Esophagus muscularis mucosa (tissue), 4 donors: ENCODE measurements at regions of chr4 and their contacts with region 1.

Region 1: DNA sequence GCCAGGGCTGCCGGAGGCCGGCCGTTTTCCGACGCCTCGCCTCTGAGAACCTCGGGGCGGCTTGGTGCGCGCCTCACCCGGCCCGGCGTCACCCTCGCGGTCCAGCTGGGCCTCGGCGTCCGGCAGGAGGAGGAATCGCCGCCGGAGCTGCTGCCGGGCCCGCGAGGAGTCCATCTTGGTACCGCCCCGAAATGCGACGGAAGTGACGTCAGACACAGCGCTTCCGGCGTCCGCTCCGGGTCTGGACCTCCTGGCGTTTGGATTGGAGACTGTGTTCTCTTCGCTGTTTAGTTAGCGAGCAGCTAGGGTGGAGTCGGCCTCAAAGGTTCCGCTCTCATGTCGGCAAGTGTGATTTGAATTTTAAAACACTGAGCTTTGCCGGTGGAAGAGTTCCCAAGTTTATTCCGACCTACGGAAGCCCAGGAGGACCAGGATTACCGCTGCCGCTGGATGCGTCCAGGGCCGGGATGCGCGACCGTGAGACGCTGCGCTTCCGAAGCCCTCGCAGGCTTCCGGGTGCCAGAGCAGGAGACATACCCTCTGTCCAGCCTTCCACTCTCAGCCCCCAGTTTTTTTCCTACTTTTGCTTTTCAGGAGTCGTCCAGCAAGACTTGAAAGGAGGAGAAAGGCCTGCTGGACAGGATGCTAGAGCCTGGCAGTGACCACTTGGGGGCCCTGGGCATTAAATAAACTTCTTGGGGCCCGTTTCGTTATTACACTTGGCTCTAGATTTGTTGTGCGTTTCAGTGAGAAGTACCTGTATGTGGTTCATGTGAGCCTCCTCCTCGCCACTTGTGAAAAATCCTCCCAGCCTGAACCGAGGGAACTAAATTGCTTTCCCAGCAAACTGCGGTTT is at the start of gene TMEM128:
- DNase-seq: peak; percentile 97
- H3K4me3 ChIP-seq: peak within 1 kb of the TSS; percentile 77 to 93 (median 88)
- H3K27ac ChIP-seq: peak within 1 kb of the TSS; percentile 89 to 96 (median 92)
- H3K4me1 ChIP-seq: peaks cover 19 to 38% (median 23%) of the 10 kb centered on the region in 4 donors
- H3K27me3 ChIP-seq: no peaks in the 10 kb centered on the region
- CTCF ChIP-seq: peak in 1 of 3 experiments; percentile 27
- EP300 ChIP-seq: no peak
- POLR2A ChIP-seq: peak; percentile 47
- total RNA-seq, gene TMEM128: 10.7 to 15.4 (median 14.4) TPM

Region 2: GRCh38 chr4:4334798-4335520 is 86.7 kb after region 1 on chr4:
- intact Hi-C with region 1: loop called (anchors 2 kb)
- DNase-seq: no peak
- H3K4me3 ChIP-seq: no peak overlapping the region
- H3K27ac ChIP-seq: no peak overlapping the region
- H3K4me1 ChIP-seq: peaks cover 0 to 3% (median 0%) of the 10 kb centered on the region in 4 donors
- H3K27me3 ChIP-seq: peaks cover 0 to 6% (median 0%) of the 10 kb centered on the region in 4 donors
- CTCF ChIP-seq: peak; percentile 40 to 68 (median 49)
- EP300 ChIP-seq: no peak
- POLR2A ChIP-seq: no peak